GM12878 (cell line): ENCODE measurements at regions of chr18 and their contacts with region 1.

Region 1: DNA sequence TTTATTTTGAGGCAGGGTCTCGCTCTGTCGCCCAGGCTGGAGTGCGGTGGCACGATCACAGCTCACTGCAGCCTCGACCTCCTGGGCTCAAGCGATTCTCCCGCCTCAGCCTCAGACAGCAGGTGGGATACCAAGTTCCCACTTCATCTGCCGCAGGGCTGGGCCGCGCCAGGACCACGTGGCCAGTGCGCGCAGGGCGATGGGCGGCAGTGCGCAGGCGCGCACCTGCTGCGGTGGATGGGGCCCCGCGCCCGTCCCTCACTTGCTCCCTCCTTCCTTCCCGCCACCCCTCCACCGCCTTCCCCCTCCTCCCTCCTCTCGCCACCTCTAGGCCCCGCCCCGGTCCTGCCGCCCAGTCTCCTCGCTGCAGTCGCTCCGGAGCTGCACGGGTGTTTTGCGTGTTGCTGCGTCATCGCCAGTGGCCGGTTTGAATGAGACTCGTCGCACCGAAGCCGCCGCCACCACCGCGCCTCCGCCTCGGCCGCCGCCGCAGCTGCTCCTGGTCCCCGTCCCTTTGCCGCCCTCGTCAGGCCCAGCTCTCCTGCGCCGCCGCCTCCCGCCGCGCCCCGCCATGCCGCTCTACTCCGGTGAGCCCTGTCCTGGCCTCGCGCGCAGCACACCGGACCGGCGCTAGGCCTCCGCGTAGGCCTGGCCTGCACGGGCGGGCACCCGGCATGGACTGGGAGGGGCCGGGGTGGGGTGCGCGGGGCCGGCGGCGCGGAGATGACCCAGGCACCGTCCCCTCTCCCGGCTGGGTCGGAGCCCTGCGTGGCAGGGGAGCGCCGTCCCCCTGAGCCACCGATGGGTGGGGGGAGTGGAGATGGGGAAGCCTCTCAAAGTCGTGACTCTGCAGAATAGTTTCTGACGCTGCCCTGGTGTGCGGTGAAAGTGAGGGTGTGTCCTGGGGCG is at the start of gene USP14:
- DNase-seq: peak; percentile 86
- ATAC-seq: peak; percentile 94
- H3K4me3 ChIP-seq: peak within 1 kb of the TSS; percentile 83
- H3K27ac ChIP-seq: peak within 1 kb of the TSS; percentile 74
- H3K4me1 ChIP-seq: peaks cover 8% of the 10 kb centered on the region
- H3K27me3 ChIP-seq: no peaks in the 10 kb centered on the region
- CTCF ChIP-seq: no peak
- EP300 ChIP-seq: no peak
- POLR2A ChIP-seq: peak; percentile 98
- RAD21 ChIP-seq: no peak
- polyA plus RNA-seq, gene USP14: 20.3 to 30.0 TPM

Region 2: GRCh38 chr18:210663-211179 is 52.3 kb after region 1 on chr18:
- CTCF ChIA-PET with region 1: no interaction called
- POLR2A ChIA-PET with region 1: no interaction called
- RAD21 ChIA-PET with region 1: no interaction called
- SMC1A ChIA-PET with region 1: no interaction called
- in situ Hi-C with region 1: no loop called
- intact Hi-C with region 1: no loop called
- DNase-seq: no peak
- ATAC-seq: no peak
- H3K4me3 ChIP-seq: no peak overlapping the region
- H3K27ac ChIP-seq: no peak overlapping the region
- H3K4me1 ChIP-seq: no peaks in the 10 kb centered on the region
- H3K27me3 ChIP-seq: no peaks in the 10 kb centered on the region
- CTCF ChIP-seq: no peak
- EP300 ChIP-seq: no peak
- POLR2A ChIP-seq: no peak
- RAD21 ChIP-seq: no peak

Region 3: GRCh38 chr18:267688-268552 is 109.5 kb after region 1 on chr18 and contains the start of gene THOC1:
- CTCF ChIA-PET with region 1: interaction called, 6 read pairs
- POLR2A ChIA-PET with region 1: interaction called, 3 read pairs
- RAD21 ChIA-PET with region 1: interaction called, 9 read pairs
- SMC1A ChIA-PET with region 1: interaction called, 5 read pairs
- in situ Hi-C with region 1: no loop called
- intact Hi-C with region 1: loop called (anchors 1 kb)
- DNase-seq: peak; percentile 70
- ATAC-seq: peak; percentile 93
- H3K4me3 ChIP-seq: peak within 1 kb of the TSS; percentile 95
- H3K27ac ChIP-seq: peak within 1 kb of the TSS; percentile 97
- H3K4me1 ChIP-seq: no peaks in the 10 kb centered on the region; the same call in 1 of the 2 replicates
- H3K27me3 ChIP-seq: no peaks in the 10 kb centered on the region
- CTCF ChIP-seq: no peak
- EP300 ChIP-seq: peak; percentile 50 to 54; a peak in 1 of 4 replicates
- POLR2A ChIP-seq: peak; percentile 98
- RAD21 ChIP-seq: no peak
- polyA plus RNA-seq, gene THOC1: 35.5 to 38.5 TPM

Region 4: DNA sequence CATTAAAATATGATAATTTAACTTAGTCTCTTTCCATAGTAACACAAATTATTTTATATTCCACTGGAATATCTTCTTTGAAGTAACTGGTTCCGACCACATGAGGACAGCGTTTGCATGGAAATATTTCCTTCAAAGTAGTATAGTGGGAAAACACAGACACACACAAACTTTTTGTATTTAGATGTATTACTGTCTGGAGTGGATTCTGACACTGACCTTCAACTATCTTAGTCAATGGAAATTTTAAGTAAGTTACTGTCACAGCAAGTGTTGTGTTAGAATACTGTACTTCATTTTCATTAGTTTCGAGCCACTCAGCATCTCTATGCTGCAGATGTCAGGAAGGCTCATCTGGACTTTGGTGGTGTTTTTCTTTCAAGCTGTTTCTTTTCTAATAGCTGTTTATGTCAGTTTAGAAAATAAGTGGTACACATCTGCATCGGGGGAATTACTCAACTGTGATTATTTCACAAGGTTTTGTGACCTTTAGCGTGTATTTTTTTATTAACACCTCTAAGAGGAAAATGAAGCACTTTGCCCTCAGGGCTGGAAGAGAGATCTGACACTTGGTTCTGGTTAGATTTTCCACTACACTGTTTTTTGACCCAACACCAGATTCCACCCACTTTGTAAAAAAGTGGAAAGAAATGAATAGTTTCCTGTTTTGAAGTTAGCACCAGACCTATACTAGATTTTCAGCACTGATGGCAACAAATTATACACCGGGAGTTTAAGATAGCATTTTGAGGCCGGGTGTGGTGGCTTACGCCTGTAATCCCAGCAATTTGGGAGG is 128.3 kb after region 1 on chr18:
- CTCF ChIA-PET with region 1: no interaction called
- POLR2A ChIA-PET with region 1: no interaction called
- RAD21 ChIA-PET with region 1: no interaction called
- SMC1A ChIA-PET with region 1: no interaction called
- in situ Hi-C with region 1: no loop called
- intact Hi-C with region 1: no loop called
- DNase-seq: no peak
- ATAC-seq: no peak
- H3K4me3 ChIP-seq: no peak overlapping the region
- H3K27ac ChIP-seq: no peak overlapping the region
- H3K4me1 ChIP-seq: no peaks in the 10 kb centered on the region
- H3K27me3 ChIP-seq: no peaks in the 10 kb centered on the region
- CTCF ChIP-seq: peak; percentile 6 to 34 (median 19); a peak in 3 of 6 replicates
- EP300 ChIP-seq: no peak
- POLR2A ChIP-seq: no peak
- RAD21 ChIP-seq: peak; percentile 43